ENCODE measurements at regions of chr14 and their contacts with region 1.

Region 1: GRCh38 chr14:52695481-52696091 is at the start of gene ERO1A:
- DNase-seq: peak; percentile 75
- H3K4me3 Mint-ChIP-seq: peak within 1 kb of the TSS; percentile 92
- H3K27ac Mint-ChIP-seq: peak within 1 kb of the TSS; percentile 98
- H3K4me1 Mint-ChIP-seq: peaks cover 42% of the 10 kb centered on the region
- H3K27me3 Mint-ChIP-seq: no peaks in the 10 kb centered on the region
- total RNA-seq, gene ERO1A: 256 to 270 TPM

Region 2: GRCh38 chr14:52552063-52552988 is 143.3 kb before region 1 on chr14 and contains the starts of genes GPR137C and TXNDC16:
- CTCF ChIA-PET with region 1: interaction called, 6 read pairs
- POLR2A ChIA-PET with region 1: interaction called, 23 read pairs
- DNase-seq: peak; percentile 100
- H3K4me3 Mint-ChIP-seq: peak within 1 kb of the TSS; percentile 92
- H3K27ac Mint-ChIP-seq: peak within 1 kb of the TSS; percentile 78
- H3K4me1 Mint-ChIP-seq: peaks cover 27% of the 10 kb centered on the region
- H3K27me3 Mint-ChIP-seq: peaks cover 20% of the 10 kb centered on the region
- total RNA-seq, gene GPR137C: 0.30 to 0.88 TPM
- total RNA-seq, gene TXNDC16: 8.8 to 9.4 TPM

Region 3: GRCh38 chr14:52706724-52707706 is 11.4 kb after region 1 on chr14 and contains the start of gene PSMC6:
- CTCF ChIA-PET with region 1: interaction called, 3 read pairs
- POLR2A ChIA-PET with region 1: interaction called, 130 read pairs
- DNase-seq: peak; percentile 95
- H3K4me3 Mint-ChIP-seq: peak within 1 kb of the TSS; percentile 92
- H3K27ac Mint-ChIP-seq: peak within 1 kb of the TSS; percentile 91
- H3K4me1 Mint-ChIP-seq: peaks cover 52% of the 10 kb centered on the region
- H3K27me3 Mint-ChIP-seq: no peaks in the 10 kb centered on the region
- total RNA-seq, gene PSMC6: 78.3 to 80.8 TPM

Region 4: GRCh38 chr14:52729925-52730667 is 34.5 kb after region 1 on chr14 and contains the start of gene STYX:
- CTCF ChIA-PET with region 1: no interaction called
- POLR2A ChIA-PET with region 1: interaction called, 12 read pairs
- DNase-seq: peak; percentile 98
- H3K4me3 Mint-ChIP-seq: peak within 1 kb of the TSS; percentile 95
- H3K27ac Mint-ChIP-seq: peak within 1 kb of the TSS; percentile 83
- H3K4me1 Mint-ChIP-seq: peaks cover 37% of the 10 kb centered on the region
- H3K27me3 Mint-ChIP-seq: no peaks in the 10 kb centered on the region
- total RNA-seq, gene STYX: 21.0 to 25.1 TPM

Region 5: GRCh38 chr14:52759145-52759544 is 63.6 kb after region 1 on chr14:
- CTCF ChIA-PET with region 1: no interaction called
- POLR2A ChIA-PET with region 1: no interaction called
- DNase-seq: no peak
- H3K4me3 Mint-ChIP-seq: no peak overlapping the region
- H3K27ac Mint-ChIP-seq: no peak overlapping the region
- H3K4me1 Mint-ChIP-seq: peaks cover 9% of the 10 kb centered on the region
- H3K27me3 Mint-ChIP-seq: no peaks in the 10 kb centered on the region

Region 6: GRCh38 chr14:52776816-52777215 is 81.2 kb after region 1 on chr14:
- CTCF ChIA-PET with region 1: no interaction called
- POLR2A ChIA-PET with region 1: no interaction called
- DNase-seq: no peak
- H3K4me3 Mint-ChIP-seq: no peak overlapping the region
- H3K27ac Mint-ChIP-seq: no peak overlapping the region
- H3K4me1 Mint-ChIP-seq: no peaks in the 10 kb centered on the region
- H3K27me3 Mint-ChIP-seq: no peaks in the 10 kb centered on the region

Measured in activated CD4-positive, alpha-beta memory T cell treated with anti-CD3 and anti-CD28 coated beads, Interleukin-2, amount 10 ng/mL, durations not matched to agents 7 days and 5 days (primary cell).